ENCODE measurements at regions of chr12 and their contacts with region 1.

Region 1: DNA sequence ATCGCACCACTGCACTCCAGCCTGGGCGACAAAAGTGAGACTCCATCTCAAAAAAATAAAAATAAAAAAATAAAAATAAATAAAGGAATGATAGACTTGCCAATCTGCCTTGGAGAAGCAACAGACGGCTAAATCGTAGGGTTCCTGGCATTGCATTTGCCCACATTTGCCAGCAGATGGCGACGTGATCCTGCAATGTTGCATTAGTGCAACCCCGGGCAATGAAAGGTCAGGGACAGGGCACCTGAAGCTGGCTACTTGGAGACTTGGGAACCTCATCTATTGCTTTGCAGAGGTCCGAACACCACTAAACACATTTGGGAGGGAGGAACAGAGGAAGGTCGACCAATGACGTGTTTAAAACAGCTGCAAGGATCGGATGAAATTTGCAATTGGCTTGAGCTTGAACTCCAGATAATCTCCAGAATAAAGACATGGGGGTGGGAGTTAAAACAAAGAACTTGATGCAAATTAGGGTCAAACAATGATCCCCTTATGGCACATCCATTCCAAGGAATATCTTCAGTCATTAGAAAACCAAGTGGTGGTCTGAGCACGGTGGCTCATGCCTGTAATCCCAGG is 34.6 kb downstream of the SPRING1 start:
- DNase-seq: peak; percentile 78
- H3K4me3 Mint-ChIP-seq: no peak overlapping the region
- H3K27ac Mint-ChIP-seq: no peak overlapping the region
- H3K4me1 Mint-ChIP-seq: peaks cover 2% of the 10 kb centered on the region
- H3K27me3 Mint-ChIP-seq: peaks cover 2% of the 10 kb centered on the region

Region 2: GRCh38 chr12:116172224-116172849 is 531.0 kb before region 1 on chr12:
- CTCF ChIA-PET with region 1: no interaction called
- intact Hi-C with region 1: no loop called
- DNase-seq: peak; percentile 78
- H3K4me3 Mint-ChIP-seq: peak overlapping the region; percentile 58
- H3K27ac Mint-ChIP-seq: peak overlapping the region; percentile 92
- H3K4me1 Mint-ChIP-seq: peaks cover 67% of the 10 kb centered on the region
- H3K27me3 Mint-ChIP-seq: no peaks in the 10 kb centered on the region

Region 3: DNA sequence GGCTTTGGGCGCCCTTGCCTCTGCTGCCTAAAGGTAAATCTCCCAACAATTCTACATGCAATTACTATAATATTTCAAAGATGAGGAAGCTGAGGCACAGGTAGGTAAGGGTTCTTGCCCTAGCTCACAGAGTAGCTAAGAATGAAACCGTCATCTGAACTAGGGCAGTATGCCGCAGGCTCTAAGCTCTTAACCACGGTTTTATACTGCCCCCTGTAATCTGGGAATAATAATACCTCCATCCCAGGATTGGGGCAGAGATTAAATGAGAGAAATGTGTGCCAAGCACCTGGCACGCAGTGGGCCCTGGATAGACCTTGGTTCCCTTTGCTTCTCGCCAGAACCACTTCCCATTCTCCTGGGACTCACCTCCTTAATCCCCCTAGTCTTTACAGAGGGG is 179.4 kb after region 1 on chr12:
- CTCF ChIA-PET with region 1: interaction called, 6 read pairs
- intact Hi-C with region 1: loop called (anchors 1 kb)
- DNase-seq: peak; percentile 6
- H3K4me3 Mint-ChIP-seq: no peak overlapping the region
- H3K27ac Mint-ChIP-seq: no peak overlapping the region
- H3K4me1 Mint-ChIP-seq: peaks cover 26% of the 10 kb centered on the region
- H3K27me3 Mint-ChIP-seq: peaks cover 51% of the 10 kb centered on the region

Region 4: GRCh38 chr12:116955382-116956021 is 252.2 kb after region 1 on chr12:
- CTCF ChIA-PET with region 1: interaction called, 6 read pairs
- intact Hi-C with region 1: loop called (anchors 2 kb)
- DNase-seq: peak; percentile 14
- H3K4me3 Mint-ChIP-seq: no peak overlapping the region
- H3K27ac Mint-ChIP-seq: no peak overlapping the region
- H3K4me1 Mint-ChIP-seq: peaks cover 14% of the 10 kb centered on the region
- H3K27me3 Mint-ChIP-seq: no peaks in the 10 kb centered on the region

Region 5: GRCh38 chr12:117025481-117026151 is 322.3 kb after region 1 on chr12:
- CTCF ChIA-PET with region 1: interaction called, 5 read pairs
- intact Hi-C with region 1: loop called (anchors 1 kb)
- DNase-seq: peak; percentile 54
- H3K4me3 Mint-ChIP-seq: no peak overlapping the region
- H3K27ac Mint-ChIP-seq: no peak overlapping the region
- H3K4me1 Mint-ChIP-seq: no peaks in the 10 kb centered on the region
- H3K27me3 Mint-ChIP-seq: no peaks in the 10 kb centered on the region

Region 6: GRCh38 chr12:117119592-117120198 is 416.4 kb after region 1 on chr12:
- CTCF ChIA-PET with region 1: interaction called, 8 read pairs
- intact Hi-C with region 1: loop called (anchors 1 kb)
- DNase-seq: peak; percentile 40
- H3K4me3 Mint-ChIP-seq: no peak overlapping the region
- H3K27ac Mint-ChIP-seq: no peak overlapping the region
- H3K4me1 Mint-ChIP-seq: peaks cover 5% of the 10 kb centered on the region
- H3K27me3 Mint-ChIP-seq: no peaks in the 10 kb centered on the region

Region 7: GRCh38 chr12:117408161-117408791 is 705.0 kb after region 1 on chr12:
- CTCF ChIA-PET with region 1: no interaction called
- intact Hi-C with region 1: no loop called
- DNase-seq: no peak
- H3K4me3 Mint-ChIP-seq: no peak overlapping the region
- H3K27ac Mint-ChIP-seq: no peak overlapping the region
- H3K4me1 Mint-ChIP-seq: no peaks in the 10 kb centered on the region
- H3K27me3 Mint-ChIP-seq: no peaks in the 10 kb centered on the region

Measured in activated naive CD4-positive, alpha-beta T cell treated with anti-CD3 and anti-CD28 coated beads for 36 hours (primary cell).